Common myeloid progenitor, CD34-positive (primary cell): ENCODE measurements at regions of chr11 and their contacts with region 1.

Region 1: DNA sequence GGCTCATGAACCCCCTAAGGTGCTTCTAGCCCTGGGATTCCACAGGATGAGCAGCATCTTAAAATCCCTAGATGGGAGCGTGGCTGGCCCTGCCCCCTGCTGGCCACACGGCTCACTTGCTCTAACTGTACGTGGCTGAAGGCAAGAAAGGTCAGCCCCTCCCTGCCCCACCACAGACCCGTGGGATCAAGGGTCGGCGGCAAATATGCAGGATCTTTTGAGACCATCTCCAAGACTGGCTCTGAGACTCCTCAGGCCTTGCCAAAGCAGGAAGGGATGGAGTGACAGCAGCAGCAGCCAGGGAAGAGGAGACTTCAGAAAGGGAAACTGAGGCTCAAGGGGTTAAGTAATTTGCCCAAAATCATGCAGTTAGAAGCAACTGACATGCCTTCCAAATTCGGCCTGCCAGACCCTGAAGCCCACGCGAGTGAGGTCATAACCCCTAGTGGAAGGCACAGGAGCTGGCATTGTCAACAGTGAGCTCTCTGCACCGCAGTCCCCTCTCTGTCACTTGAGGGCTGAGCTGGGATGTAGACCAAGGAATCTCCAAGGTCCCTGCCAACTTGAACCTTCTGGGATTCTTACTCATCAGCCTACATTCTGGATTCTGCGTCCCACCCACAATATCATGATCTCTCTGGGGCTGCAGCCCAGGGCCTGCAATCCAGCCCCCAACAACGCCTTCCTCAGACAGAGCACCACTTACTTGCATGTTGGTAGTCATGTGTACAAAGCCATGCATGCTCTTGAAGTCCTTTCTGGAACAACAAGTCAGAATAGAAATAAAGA is 31.4 kb downstream of the CREB3L1 start:
- DNase-seq: peak; percentile 63 to 72 (median 65)
- H3K4me3 ChIP-seq: peak overlapping the region in 1 of 7 experiments; percentile 23
- H3K27ac ChIP-seq: no peak overlapping the region
- H3K4me1 ChIP-seq: peaks cover 7 to 21% (median 17%) of the 10 kb centered on the region in 4 experiments
- H3K27me3 ChIP-seq: no peaks in the 10 kb centered on the region

Region 2: DNA sequence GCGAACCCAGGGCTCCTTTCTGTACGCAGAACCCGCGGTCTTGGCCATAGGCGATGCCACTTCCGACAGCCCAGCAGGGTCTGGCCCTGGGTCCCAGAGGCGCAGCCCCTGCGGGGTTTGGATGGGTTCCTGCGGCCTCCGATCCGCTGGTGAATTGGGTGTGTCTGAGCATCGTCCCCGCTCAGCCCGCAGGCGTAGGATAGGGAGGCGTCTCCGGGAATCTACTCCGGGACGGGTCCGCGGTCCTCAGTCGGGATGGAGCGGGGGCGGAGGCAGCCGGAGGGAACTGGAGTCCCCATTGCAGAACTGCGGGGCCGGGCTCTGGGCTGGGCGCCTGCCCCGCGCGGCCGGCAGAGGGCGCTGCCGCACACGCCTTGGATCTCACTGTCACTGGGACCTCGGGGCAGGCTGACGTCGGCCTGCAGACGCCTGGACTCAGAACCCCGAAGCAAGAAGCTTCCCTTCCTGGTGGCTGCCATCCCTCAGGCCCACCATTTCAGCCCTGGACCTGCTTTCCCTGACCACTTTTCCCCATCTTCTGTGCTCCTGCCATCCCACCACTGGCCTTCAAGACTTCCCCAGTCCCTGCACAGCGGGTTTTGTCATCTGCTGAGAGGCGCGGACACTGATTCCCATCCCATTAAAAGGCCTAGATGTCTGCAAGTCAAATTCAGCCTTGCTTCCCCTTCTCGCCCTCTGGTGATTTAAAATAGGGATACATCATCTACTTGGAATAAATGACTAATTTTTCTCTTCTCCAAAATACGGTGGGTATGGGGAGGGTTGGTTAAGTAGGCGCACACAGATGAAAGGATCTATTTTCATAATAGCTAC is 69.6 kb before region 1 on chr11:
- CTCF ChIA-PET with region 1: interaction called, 240 read pairs
- POLR2A ChIA-PET with region 1: no interaction called
- DNase-seq: peak; percentile 73 to 83 (median 83)
- H3K4me3 ChIP-seq: peak overlapping the region; percentile 19 to 73 (median 32)
- H3K27ac ChIP-seq: no peak overlapping the region
- H3K4me1 ChIP-seq: peaks cover 5 to 40% (median 32%) of the 10 kb centered on the region in 4 experiments
- H3K27me3 ChIP-seq: peaks cover 0 to 25% (median 10%) of the 10 kb centered on the region in 5 experiments

Region 3: GRCh38 chr11:46278387-46279125 is 30.3 kb before region 1 on chr11:
- CTCF ChIA-PET with region 1: interaction called, 12 read pairs
- POLR2A ChIA-PET with region 1: no interaction called
- DNase-seq: peak; percentile 35 to 60 (median 57)
- H3K4me3 ChIP-seq: peak overlapping the region in 6 of 7 experiments; percentile 25 to 70 (median 56)
- H3K27ac ChIP-seq: peak overlapping the region in 1 of 2 experiments; percentile 43
- H3K4me1 ChIP-seq: peaks cover 0 to 27% (median 22%) of the 10 kb centered on the region in 4 experiments
- H3K27me3 ChIP-seq: peaks cover 2 to 42% (median 12%) of the 10 kb centered on the region in 5 experiments

Region 4: GRCh38 chr11:46338988-46339666 is 30.3 kb after region 1 on chr11:
- CTCF ChIA-PET with region 1: interaction called, 94 read pairs
- POLR2A ChIA-PET with region 1: no interaction called
- DNase-seq: peak in 2 of 3 donors; percentile 45 to 56
- H3K4me3 ChIP-seq: peak overlapping the region in 5 of 7 experiments; percentile 7 to 68 (median 44)
- H3K27ac ChIP-seq: peak overlapping the region in 1 of 2 experiments; percentile 28
- H3K4me1 ChIP-seq: peaks cover 6 to 82% (median 72%) of the 10 kb centered on the region in 4 experiments
- H3K27me3 ChIP-seq: peaks cover 0 to under 1% (median 0%) of the 10 kb centered on the region in 5 experiments